Naive thymus-derived CD4-positive, alpha-beta T cell (primary cell): ENCODE measurements at regions of chr14 and their contacts with region 1.

Region 1: GRCh38 chr14:100306420-100307219 is at the start of gene SLC25A29:
- DNase-seq: peak; percentile 26 to 87 (median 39)
- ATAC-seq: peak; percentile 93
- H3K4me3 ChIP-seq: peak within 1 kb of the TSS; percentile 59
- H3K4me3 Mint-ChIP-seq: peak within 1 kb of the TSS; percentile 83 to 95 (median 88)
- H3K27ac ChIP-seq: peak within 1 kb of the TSS; percentile 51
- H3K27ac Mint-ChIP-seq: peak within 1 kb of the TSS in 4 of 9 donors; percentile 49 to 81 (median 56)
- H3K4me1 ChIP-seq: peaks cover 4 to 7% of the 10 kb centered on the region in 2 donors
- H3K4me1 Mint-ChIP-seq: peaks cover 0 to 24% (median 10%) of the 10 kb centered on the region in 7 donors
- H3K27me3 ChIP-seq: no peaks in the 10 kb centered on the region
- H3K27me3 Mint-ChIP-seq: peaks cover 0 to 39% (median 0%) of the 10 kb centered on the region in 5 donors
- total RNA-seq, gene SLC25A29: 5.9 to 25.6 (median 10.4) TPM

Region 2: DNA sequence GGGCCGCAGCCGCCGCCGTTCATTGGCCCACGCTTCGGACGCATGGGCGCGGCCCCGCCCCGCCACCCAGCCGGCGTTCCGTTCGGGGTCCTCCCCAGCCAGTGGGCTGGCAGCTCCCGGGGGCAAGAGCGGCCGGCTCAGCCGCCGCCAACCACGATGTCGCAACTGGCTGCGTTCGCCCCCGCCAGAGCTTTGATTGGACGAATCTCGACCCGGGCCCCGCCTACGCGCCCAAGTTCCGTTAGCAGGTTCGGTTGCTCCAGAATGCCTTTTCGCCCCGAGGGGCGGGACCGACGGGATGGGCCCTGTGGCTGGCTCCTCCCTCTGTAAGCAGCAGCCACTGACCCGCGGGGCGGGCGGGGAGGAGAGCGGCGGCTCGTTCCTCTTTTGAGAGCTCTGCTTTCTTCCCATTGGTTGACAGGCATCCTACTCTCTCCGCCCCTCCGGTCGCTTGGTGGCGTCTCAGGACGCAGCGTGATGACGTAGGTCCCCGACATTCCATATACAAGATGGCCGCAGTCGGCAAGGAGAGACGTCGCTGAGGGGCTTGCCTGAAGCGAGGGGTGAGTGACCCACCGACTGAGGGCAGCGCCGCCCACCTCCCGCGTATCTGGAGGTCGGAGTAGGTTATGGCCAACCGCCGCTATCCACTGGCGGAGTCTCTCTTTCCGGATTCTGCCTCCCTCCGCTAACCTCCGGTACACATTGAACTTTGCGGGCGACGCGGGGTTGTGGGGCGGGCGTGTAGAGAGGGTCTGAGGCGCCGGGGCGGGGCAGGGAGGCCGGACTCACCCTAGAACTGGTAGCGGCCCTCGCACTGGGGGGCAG is 825.5 kb before region 1 on chr14 and contains the start of gene CCNK:
- CTCF ChIA-PET with region 1: no interaction called
- POLR2A ChIA-PET with region 1: no interaction called
- intact Hi-C with region 1: loop called in 1 of 2 experiments (anchors 10 kb)
- DNase-seq: peak; percentile 98 to 100 (median 100)
- ATAC-seq: peak; percentile 92
- H3K4me3 ChIP-seq: peak within 1 kb of the TSS; percentile 86
- H3K4me3 Mint-ChIP-seq: peak within 1 kb of the TSS; percentile 89 to 100 (median 98)
- H3K27ac ChIP-seq: peak within 1 kb of the TSS; percentile 93
- H3K27ac Mint-ChIP-seq: peak within 1 kb of the TSS; percentile 95 to 99 (median 98)
- H3K4me1 ChIP-seq: peaks cover 26 to 34% of the 10 kb centered on the region in 2 donors
- H3K4me1 Mint-ChIP-seq: peaks cover 44 to 79% (median 70%) of the 10 kb centered on the region in 7 donors
- H3K27me3 ChIP-seq: no peaks in the 10 kb centered on the region
- H3K27me3 Mint-ChIP-seq: no peaks in the 10 kb centered on the region
- total RNA-seq, gene CCNK: 68.4 to 139 (median 81.9) TPM

Region 3: GRCh38 chr14:99971087-99971940 is 335.3 kb before region 1 on chr14:
- CTCF ChIA-PET with region 1: no interaction called
- POLR2A ChIA-PET with region 1: interaction called, 3 read pairs
- intact Hi-C with region 1: loop called in 1 of 2 experiments (anchors 2 kb)
- DNase-seq: peak; percentile 69 to 87 (median 81)
- ATAC-seq: peak; percentile 95
- H3K4me3 ChIP-seq: peak overlapping the region; percentile 53
- H3K4me3 Mint-ChIP-seq: peak overlapping the region; percentile 43 to 93 (median 76)
- H3K27ac ChIP-seq: peak overlapping the region; percentile 58
- H3K27ac Mint-ChIP-seq: peak overlapping the region in 4 of 9 donors; percentile 21 to 87 (median 48)
- H3K4me1 ChIP-seq: no peaks in the 10 kb centered on the region
- H3K4me1 Mint-ChIP-seq: peaks cover 7 to 21% (median 15%) of the 10 kb centered on the region in 7 donors
- H3K27me3 ChIP-seq: no peaks in the 10 kb centered on the region
- H3K27me3 Mint-ChIP-seq: peaks cover 0 to 33% (median 7%) of the 10 kb centered on the region in 5 donors

Region 4: DNA sequence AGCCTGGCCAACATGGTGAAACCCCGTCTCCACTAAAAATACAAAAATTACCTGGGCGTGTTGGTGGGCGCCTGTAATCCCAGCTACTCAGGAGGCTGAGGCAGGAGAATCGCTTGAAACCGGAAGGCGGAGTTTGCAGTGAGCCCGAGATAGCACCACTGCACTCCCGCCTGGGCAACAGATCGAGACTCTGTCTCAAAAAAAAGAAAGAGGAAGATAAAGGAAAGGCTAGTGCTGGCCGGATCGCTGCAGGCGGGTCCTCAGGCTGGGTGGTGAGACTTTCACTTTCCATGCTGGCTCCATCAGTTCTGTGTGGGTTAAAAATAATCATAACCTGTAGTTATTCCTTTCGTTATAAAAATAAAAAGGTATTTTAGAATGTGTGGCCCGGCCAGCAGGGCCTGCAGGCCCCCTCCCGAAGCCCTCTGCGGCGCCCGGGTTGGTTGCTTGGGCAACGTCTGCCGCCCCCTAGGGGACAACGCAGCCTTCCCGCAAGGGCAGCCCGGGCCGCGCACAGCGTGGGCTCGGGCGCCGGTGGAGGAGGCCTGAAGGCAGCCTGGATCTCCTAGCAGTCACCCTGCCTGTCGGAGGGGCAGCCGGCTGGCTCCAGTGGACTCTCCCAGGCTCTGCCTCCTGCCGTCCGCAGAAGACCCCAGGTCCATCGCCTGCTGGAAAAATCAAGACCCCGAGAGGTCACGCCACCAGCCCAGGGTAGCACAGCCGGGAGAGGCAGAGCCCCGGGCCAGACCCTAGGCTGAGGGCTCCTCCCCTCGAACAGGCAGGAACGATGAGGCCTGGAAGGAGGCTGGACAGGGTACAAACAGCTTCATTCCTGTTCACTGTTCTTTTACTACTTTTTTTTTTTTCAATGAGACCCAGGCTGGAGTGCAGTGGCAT is 11.5 kb after region 1 on chr14:
- CTCF ChIA-PET with region 1: no interaction called
- POLR2A ChIA-PET with region 1: no interaction called
- intact Hi-C with region 1: loop called in 1 of 2 experiments (anchors 2 kb)
- DNase-seq: peak; percentile 38 to 72 (median 58)
- ATAC-seq: peak; percentile 97
- H3K4me3 ChIP-seq: peak overlapping the region; percentile 53
- H3K4me3 Mint-ChIP-seq: peak overlapping the region; percentile 45 to 79 (median 72)
- H3K27ac ChIP-seq: no peak overlapping the region
- H3K27ac Mint-ChIP-seq: peak overlapping the region in 1 of 9 donors; percentile 9
- H3K4me1 ChIP-seq: no peaks in the 10 kb centered on the region
- H3K4me1 Mint-ChIP-seq: peaks cover 4 to 7% (median 5%) of the 10 kb centered on the region in 7 donors
- H3K27me3 ChIP-seq: no peaks in the 10 kb centered on the region
- H3K27me3 Mint-ChIP-seq: peaks cover 0 to 5% (median 0%) of the 10 kb centered on the region in 5 donors

Region 5: DNA sequence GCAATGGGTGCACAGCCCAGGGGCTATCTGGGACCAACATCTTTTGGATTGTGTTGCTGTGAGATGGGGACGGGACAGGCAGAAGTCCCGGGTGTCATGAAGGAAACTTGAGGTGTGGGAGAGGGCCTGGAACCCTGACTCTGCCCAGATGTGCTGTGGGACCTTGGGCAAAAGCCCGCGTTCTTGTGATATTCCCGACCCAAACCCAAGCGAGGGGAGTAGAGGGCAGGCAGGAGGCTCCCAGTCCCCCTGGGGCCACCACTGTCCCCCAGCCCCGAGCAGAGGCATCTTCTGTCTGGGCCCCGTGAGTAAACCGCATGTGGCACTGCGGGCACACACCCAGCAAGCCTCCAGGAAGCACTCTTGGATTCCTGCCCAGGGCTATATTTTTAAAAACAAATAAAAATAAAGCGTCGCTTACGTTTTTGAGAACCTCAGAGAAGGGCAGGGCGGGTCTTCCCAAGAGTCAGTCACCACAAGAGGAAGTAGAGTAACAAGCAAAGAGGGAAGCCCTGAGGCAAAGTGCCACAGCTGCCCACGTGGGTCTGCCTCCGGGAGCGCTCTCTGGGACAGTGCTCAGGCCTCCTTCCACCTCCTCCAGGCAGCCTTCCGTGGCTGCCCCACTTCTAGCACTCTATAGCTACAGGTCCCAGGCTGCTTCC is 241.1 kb after region 1 on chr14:
- CTCF ChIA-PET with region 1: no interaction called
- POLR2A ChIA-PET with region 1: no interaction called
- intact Hi-C with region 1: loop called in 1 of 2 experiments (anchors 10 kb)
- DNase-seq: peak in 6 of 9 donors; percentile 43 to 90 (median 79)
- ATAC-seq: peak; percentile 76
- H3K4me3 ChIP-seq: peak overlapping the region; percentile 50
- H3K4me3 Mint-ChIP-seq: peak overlapping the region; percentile 51 to 87 (median 82)
- H3K27ac ChIP-seq: peak overlapping the region; percentile 73
- H3K27ac Mint-ChIP-seq: peak overlapping the region; percentile 58 to 98 (median 89)
- H3K4me1 ChIP-seq: peaks cover 27 to 28% of the 10 kb centered on the region in 2 donors
- H3K4me1 Mint-ChIP-seq: peaks cover 9 to 38% (median 22%) of the 10 kb centered on the region in 7 donors
- H3K27me3 ChIP-seq: no peaks in the 10 kb centered on the region
- H3K27me3 Mint-ChIP-seq: no peaks in the 10 kb centered on the region